ENCODE measurements at regions of chr11 and their contacts with region 1.

Region 1: DNA sequence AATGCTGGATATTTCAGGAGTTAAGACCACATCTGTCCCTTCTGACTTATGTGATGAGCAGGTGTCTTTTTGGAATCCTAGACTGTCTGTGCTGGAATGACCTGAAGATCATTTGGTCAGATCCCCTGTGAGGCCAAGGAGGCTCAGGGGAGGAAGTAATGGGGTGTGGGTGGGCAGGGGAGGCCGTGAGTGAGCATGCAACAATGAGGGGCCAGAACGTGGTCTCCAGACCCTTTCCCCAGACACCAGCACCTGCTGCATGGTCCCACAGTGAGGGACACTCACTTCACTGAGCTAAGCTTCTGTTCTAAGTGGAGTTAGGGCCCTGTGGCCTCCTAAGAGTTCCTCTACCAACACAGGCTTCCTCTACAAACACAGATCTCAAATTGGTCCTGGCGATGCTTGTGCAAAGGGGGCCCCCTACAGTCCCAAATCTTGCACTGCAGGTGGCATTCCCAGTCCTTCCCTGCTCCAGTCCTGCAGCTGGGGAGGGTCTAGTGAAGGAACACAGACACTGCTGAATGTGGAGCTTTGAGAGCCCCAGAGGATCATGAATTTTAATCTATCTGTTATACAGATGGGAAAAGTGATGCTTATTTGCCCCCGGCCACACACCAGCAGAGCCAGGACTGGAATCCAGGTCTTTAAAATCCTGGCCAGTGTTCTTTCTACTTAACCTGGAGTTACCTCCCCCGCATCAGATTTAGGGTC is 7.4 kb downstream of the USP2 start:
- DNase-seq: peak; percentile 28
- H3K4me3 ChIP-seq: no peak overlapping the region
- CTCF ChIP-seq: peak; percentile 94

Region 2: DNA sequence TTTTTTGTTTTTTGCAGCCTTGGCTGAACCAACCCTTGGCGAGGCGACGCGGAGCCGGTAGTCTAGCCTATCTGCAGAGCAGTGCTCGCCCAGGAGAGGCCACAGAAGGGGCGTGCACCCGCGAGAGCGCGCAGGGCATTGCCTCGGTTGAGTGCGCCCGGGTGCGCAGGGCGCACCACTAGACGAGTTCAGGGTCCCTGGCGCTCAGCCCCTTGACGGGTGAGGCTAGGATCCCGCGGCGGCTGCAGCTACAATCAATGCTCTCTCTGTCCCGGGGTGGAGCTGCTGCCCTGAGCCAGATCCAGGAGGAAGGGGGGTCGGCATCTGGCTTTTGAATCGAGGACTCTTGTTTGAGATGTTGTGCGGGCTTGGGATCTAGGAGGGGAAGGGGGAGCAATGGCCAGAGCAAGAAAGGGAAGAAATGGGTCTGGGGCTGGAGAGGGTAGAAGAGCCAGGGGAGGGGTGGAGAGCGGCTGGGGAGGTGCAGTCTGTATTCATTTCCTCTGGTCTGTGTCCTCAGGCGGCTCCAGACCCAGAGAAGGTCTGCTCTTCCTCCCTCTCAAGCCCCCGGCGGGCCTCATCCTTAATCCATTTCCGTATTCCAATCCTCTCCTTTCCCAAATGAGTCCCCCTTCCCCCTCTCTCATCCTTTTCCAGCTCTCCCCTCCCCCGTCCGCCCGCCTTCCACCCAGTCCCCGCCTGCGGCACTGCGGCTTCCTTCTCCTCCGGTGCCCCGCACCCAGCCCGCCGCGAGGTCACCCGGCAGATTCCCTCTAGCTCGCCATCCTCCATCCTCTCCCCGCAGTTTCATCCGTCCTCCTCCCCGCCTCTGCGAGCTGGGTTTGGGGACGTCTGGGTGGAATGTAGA is 48.1 kb after region 1 on chr11:
- in situ Hi-C with region 1: loop called (anchors 10 kb)
- DNase-seq: no peak
- H3K4me3 ChIP-seq: peak overlapping the region; percentile 81
- CTCF ChIP-seq: no peak

Region 3: DNA sequence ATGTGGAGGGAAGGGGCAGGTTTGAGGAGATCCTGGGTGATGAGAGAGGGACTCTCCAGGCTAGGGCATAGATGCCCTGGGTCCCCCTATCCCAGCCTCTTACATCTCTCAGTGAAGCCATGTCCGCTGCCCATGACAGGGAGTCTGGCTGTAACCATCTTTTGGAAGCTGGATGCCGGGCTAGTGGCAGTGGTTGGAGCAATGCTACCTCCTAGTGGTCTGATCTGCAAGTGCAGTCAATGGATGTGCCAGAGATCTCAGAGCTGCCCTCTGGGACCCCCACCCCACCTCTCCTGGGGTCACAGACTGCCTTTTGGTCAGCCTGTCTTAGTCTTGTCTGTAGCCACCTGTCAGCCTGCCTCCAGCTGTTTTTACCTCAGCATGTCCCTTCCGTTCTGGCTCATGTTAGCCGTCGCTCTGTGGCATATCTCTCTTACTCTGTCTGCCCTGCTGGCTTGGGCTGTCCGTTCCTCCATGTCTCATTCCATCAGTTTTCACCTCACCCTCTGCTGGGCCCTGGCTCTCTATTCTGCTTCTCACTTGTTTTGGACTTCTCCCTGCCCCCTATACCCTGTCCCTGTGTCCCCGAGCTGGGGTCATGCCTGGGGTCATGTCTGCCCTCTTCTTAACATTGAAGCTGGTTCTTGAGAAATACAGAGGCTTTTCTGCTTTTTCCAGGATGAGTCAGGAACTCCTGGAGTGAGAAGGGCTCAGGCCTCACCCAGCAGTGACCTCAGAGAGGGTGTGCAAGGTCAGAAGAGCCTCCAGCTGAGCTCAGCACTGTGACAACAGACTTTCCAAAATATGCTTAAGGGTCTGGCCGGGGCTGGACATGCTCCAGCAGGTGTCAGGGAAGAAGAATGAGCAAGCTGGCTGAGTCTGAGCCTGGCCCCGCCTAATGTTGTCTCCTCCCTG is 100.9 kb after region 1 on chr11:
- in situ Hi-C with region 1: loop called (anchors 10 kb)
- DNase-seq: peak; percentile 54
- H3K4me3 ChIP-seq: no peak overlapping the region
- CTCF ChIP-seq: peak; percentile 96